Right ventricle myocardium superior (tissue), 1 donor: ENCODE measurements at regions of chr19 and their contacts with region 1.

Region 1: GRCh38 chr19:56567274-56568120 is at the start of gene ZNF470:
- DNase-seq: peak; percentile 98
- ATAC-seq: peak; percentile 100
- total RNA-seq, gene ZNF470: 2.6 TPM

Region 2: GRCh38 chr19:56538254-56538760 is 29.2 kb before region 1 on chr19:
- intact Hi-C with region 1: loop called (anchors 2 kb)
- DNase-seq: peak; percentile 94
- ATAC-seq: peak; percentile 99